MCF 10A (cell line): ENCODE measurements at regions of chrX and their contacts with region 1.

Region 1: DNA sequence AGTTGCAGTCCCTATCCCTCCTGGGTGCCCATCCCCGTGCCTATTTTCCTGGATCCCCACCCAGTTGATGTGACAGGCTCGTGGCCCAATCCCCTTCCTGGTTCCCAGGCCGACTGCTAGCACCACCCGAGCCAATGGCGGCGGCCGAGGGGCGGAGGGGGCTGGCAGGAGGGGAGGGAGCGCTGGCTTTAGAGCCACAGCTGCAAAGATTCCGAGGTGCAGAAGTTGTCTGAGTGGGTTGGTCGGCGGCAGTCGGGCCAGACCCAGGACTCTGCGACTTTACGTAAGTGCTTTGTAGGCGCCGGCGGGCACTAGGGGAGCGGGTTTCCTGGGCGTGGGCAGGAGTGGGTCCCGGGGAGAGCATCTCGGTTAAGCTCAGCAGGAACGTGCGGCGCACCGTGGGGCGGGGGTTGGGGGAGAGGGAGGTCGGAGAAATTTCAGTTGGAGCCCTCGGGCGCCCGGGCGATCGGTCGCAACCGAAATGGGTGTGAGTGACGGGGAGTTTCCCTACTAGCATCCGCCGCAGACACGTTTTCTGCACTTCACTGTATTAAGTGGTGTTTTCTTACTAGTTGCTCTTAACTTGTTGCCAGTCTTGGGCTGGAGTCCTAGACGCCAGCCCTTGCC is at the start of gene PLS3:
- DNase-seq: peak; percentile 81
- H3K4me3 Mint-ChIP-seq: peak within 1 kb of the TSS; percentile 84
- H3K27ac Mint-ChIP-seq: peak within 1 kb of the TSS; percentile 93
- H3K4me1 Mint-ChIP-seq: no peaks in the 10 kb centered on the region
- H3K27me3 Mint-ChIP-seq: peaks cover 36% of the 10 kb centered on the region
- CTCF ChIP-seq: no peak
- total RNA-seq, gene PLS3: 127 and 147 TPM in 2 replicates

Region 2: DNA sequence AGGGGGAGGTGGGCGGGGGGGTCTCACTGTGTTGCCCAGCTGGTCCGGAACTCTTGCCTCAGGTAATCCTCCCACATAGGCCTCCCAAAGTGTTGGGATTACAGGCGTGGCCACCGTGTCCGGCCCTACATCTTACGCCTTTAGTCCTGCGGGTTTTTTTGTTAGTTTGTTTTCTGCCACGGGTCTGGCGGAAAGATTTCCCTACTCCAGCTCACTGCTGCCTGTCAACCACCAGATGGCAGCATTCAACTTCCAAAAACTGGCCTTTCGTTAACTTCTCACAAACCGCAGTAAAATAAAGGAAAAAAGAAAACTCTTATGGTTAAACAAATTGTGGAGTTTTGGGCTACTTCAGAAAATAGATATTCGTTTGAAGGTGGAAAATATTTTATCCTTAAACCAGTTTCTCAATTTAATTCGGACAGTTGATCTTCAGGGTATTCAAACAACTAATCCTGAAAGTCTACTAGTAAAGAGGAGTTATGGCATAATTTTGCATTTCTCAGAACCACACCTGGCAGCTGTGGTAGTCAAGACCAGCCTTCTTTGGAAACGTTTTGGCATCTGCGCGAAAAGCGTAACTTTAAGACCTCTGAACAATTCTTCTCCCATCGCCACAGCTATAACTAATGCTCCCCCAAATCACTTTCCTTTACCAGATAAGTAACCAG is 230.5 kb before region 1 on chrX:
- CTCF ChIA-PET with region 1: interaction called, 4 read pairs
- POLR2A ChIA-PET with region 1: interaction called, 4 read pairs
- intact Hi-C with region 1: loop called (anchors 5 kb)
- DNase-seq: peak; percentile 70
- H3K4me3 Mint-ChIP-seq: no peak overlapping the region
- H3K27ac Mint-ChIP-seq: no peak overlapping the region
- H3K4me1 Mint-ChIP-seq: no peaks in the 10 kb centered on the region
- H3K27me3 Mint-ChIP-seq: peaks cover 55% of the 10 kb centered on the region
- CTCF ChIP-seq: peak; percentile 71

Region 3: GRCh38 chrX:115378471-115378870 is 182.6 kb before region 1 on chrX:
- CTCF ChIA-PET with region 1: no interaction called
- POLR2A ChIA-PET with region 1: no interaction called
- intact Hi-C with region 1: no loop called
- DNase-seq: peak; percentile 19
- H3K4me3 Mint-ChIP-seq: no peak overlapping the region
- H3K27ac Mint-ChIP-seq: no peak overlapping the region
- H3K4me1 Mint-ChIP-seq: no peaks in the 10 kb centered on the region
- H3K27me3 Mint-ChIP-seq: peaks cover 71% of the 10 kb centered on the region
- CTCF ChIP-seq: no peak

Region 4: GRCh38 chrX:115584696-115585095 is 23.6 kb after region 1 on chrX:
- CTCF ChIA-PET with region 1: interaction called, 3 read pairs
- POLR2A ChIA-PET with region 1: interaction called, 160 read pairs
- intact Hi-C with region 1: no loop called
- DNase-seq: no peak
- H3K4me3 Mint-ChIP-seq: no peak overlapping the region
- H3K27ac Mint-ChIP-seq: peak overlapping the region; percentile 86
- H3K4me1 Mint-ChIP-seq: peaks cover 12% of the 10 kb centered on the region
- H3K27me3 Mint-ChIP-seq: peaks cover 49% of the 10 kb centered on the region
- CTCF ChIP-seq: no peak

Region 5: DNA sequence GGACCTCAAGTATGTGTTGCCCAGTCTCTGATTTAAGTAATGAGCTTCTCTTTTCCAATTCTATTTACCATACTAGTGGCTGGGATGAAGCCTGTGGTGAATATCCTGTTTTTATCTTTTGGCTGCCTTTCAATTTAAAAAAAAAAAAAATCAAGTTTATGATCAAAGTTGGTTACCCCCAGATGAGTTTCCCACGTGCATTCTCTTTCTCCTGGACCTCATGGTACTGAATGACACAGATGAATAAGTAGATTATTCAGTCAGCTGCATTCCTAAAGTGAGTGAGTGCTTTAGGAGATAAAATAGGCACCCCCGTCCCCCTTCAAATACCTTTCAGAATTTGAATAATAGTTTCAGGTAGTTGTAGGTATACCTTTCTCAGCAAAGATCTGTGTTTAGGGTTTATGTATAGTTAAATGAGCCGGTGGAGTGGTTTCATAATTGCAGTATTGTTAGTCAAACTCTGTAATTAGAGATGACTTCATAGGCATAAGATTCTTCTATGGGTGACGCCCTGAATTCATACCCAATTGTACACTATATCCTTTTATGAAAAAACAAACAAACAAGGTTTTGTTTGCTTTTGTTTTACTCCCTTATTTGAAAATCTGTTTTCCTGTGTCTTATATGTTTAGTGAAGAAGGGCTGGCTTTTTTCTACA is 41.8 kb after region 1 on chrX:
- CTCF ChIA-PET with region 1: no interaction called
- POLR2A ChIA-PET with region 1: interaction called, 11 read pairs
- intact Hi-C with region 1: no loop called
- DNase-seq: no peak
- H3K4me3 Mint-ChIP-seq: peak overlapping the region; percentile 13
- H3K27ac Mint-ChIP-seq: peak overlapping the region; percentile 42
- H3K4me1 Mint-ChIP-seq: no peaks in the 10 kb centered on the region
- H3K27me3 Mint-ChIP-seq: peaks cover 50% of the 10 kb centered on the region
- CTCF ChIP-seq: no peak

Region 6: GRCh38 chrX:115642895-115643530 is 81.9 kb after region 1 on chrX:
- CTCF ChIA-PET with region 1: interaction called, 7 read pairs
- POLR2A ChIA-PET with region 1: no interaction called
- intact Hi-C with region 1: loop called (anchors 5 kb)
- DNase-seq: peak; percentile 65
- H3K4me3 Mint-ChIP-seq: no peak overlapping the region
- H3K27ac Mint-ChIP-seq: no peak overlapping the region
- H3K4me1 Mint-ChIP-seq: no peaks in the 10 kb centered on the region
- H3K27me3 Mint-ChIP-seq: peaks cover 64% of the 10 kb centered on the region
- CTCF ChIP-seq: peak; percentile 84

Region 7: GRCh38 chrX:115665122-115665521 is 104.0 kb after region 1 on chrX:
- CTCF ChIA-PET with region 1: no interaction called
- POLR2A ChIA-PET with region 1: no interaction called
- intact Hi-C with region 1: no loop called
- DNase-seq: no peak
- H3K4me3 Mint-ChIP-seq: no peak overlapping the region
- H3K27ac Mint-ChIP-seq: no peak overlapping the region
- H3K4me1 Mint-ChIP-seq: no peaks in the 10 kb centered on the region
- H3K27me3 Mint-ChIP-seq: peaks cover 25% of the 10 kb centered on the region
- CTCF ChIP-seq: no peak

Region 8: GRCh38 chrX:116480059-116480458 is 919.0 kb after region 1 on chrX:
- CTCF ChIA-PET with region 1: no interaction called
- POLR2A ChIA-PET with region 1: no interaction called
- intact Hi-C with region 1: no loop called
- DNase-seq: no peak
- H3K4me3 Mint-ChIP-seq: no peak overlapping the region
- H3K27ac Mint-ChIP-seq: no peak overlapping the region
- H3K4me1 Mint-ChIP-seq: no peaks in the 10 kb centered on the region
- H3K27me3 Mint-ChIP-seq: peaks cover 54% of the 10 kb centered on the region
- CTCF ChIP-seq: no peak